AG04449 (cell line): ENCODE measurements at regions of chr18 and their contacts with region 1.

Region 1: DNA sequence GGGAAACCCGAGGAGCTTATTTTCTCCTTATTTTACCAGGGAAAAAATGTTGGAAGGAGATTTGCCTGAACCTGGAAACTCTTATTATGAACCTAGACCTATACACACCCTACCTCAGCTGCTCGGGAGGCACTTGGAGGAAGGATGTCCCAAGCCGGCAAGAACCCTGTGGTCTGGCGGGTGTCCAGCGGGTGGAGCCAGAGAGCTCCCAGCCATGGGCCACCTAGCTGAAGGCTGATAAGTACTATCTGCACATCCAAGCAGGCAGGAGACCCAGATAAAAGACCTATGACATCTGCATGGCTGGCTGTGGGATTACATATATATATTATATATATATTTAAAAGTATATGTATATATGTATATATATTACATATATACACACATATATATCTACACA is 1.1 kb upstream of the SLC14A1 start:
- DNase-seq: no peak
- H3K4me3 ChIP-seq: no peak overlapping the region
- CTCF ChIP-seq: peak; percentile 95

Region 2: DNA sequence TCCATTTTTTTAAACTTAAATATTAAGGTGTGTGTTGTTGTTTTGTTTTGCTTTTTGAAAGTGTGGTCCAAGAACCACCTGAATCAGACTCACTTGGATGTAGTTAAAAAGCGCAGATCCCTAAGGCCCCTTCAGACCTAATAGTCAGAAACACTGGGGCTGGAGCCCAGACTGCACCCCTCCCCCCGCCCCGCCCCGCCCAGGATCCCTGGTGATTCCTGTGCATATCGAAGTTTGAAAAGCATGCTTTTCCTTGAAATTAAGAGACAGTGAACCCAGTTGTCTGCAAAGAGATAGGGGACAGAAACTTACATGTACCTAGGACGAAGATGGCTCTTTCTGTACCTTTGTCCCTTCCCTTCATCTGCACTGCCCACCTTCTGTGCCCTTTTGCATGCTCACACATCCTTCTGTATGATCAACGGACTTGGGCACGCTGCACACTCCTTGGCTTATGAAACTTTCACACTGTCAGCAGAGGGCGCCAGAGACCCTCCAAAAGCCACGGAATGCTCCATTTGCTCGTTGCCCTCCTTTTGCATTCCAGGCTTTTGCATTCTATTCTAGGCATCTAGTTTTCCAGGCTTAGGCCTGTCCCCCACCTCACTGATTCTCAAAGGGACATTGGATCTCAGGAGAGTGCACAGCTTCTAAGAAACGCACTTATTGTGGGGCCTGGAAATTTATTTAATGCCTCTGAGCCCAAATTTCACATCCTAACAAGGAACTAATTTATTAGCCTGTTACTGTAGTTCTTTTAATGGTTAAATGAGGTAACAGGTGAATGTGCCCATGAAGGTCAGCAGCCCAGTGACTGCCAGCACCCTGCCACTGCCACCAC is 31.7 kb before region 1 on chr18:
- CTCF ChIA-PET with region 1: interaction called, 43 read pairs
- POLR2A ChIA-PET with region 1: no interaction called
- DNase-seq: no peak
- H3K4me3 ChIP-seq: 0 out of 2 replicates have a peak overlapping the region, but pooled peaks have one; percentile 3
- CTCF ChIP-seq: peak; percentile 89

Region 3: DNA sequence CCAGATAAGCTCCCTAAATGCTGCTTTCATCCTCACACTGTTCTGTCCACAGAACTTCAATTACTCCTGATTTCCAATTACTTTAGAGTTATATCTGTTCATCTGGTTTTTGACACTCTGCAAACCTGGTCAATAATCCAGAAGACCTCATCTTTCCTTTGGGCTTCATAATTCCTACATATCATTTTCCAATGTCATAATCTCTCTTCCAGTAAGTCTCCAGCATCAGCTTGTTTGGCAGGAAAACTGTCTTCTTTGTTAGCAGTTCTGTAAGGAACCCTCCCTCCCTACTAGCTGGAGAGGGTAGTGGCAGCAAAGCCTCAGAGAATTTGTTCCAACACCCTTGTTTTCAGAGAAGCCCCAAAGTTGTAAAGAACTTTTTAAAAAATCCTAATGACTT is 10.8 kb before region 1 on chr18:
- CTCF ChIA-PET with region 1: interaction called, 14 read pairs
- POLR2A ChIA-PET with region 1: no interaction called
- DNase-seq: no peak
- H3K4me3 ChIP-seq: no peak overlapping the region
- CTCF ChIP-seq: no peak

Region 4: GRCh38 chr18:45850021-45850420 is 127.1 kb after region 1 on chr18:
- CTCF ChIA-PET with region 1: interaction called, 30 read pairs
- POLR2A ChIA-PET with region 1: no interaction called
- DNase-seq: no peak
- H3K4me3 ChIP-seq: no peak overlapping the region
- CTCF ChIP-seq: peak; percentile 44